ENCODE measurements at regions of chr7 and their contacts with region 1.

Region 1: DNA sequence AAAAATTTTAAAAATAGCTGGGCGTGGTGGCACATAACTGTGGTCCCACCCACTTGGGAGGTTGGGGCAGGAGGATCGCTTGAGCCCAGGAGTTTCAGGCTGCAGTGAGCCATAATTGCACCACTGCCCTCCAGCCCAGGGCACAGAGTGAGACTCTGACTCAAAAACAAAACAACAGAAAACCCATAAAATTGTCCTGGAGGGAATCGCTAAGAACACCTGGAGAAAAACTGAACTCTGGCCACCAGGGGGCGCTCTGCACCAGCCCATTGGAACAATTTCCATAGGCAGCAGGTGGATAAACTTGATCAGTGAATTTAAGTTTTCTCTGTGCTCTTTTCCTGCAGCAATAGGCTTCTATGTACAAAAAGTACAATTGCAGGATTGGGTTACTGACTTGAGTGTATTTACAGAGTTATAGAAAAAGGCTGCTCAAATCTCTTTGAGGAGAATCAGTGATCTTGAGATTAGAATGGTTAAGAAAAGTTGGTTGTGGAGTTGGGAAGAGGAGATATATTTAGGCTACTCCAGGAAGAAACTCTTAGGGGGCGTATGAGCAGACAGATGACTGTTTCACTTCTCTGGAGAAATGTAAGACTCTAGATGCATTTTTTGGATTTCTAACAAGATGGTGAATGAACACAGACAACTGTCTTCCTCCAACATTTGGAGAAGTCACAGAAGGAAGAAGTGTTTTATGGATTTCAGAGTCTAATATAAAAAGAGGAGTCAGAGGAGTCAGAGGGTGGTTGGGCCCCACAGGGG is 274.9 kb upstream of the GALNT17 start:
- DNase-seq: peak; percentile 58
- H3K4me3 Mint-ChIP-seq: no peak overlapping the region
- H3K27ac Mint-ChIP-seq: no peak overlapping the region
- H3K4me1 Mint-ChIP-seq: no peaks in the 10 kb centered on the region
- H3K27me3 Mint-ChIP-seq: no peaks in the 10 kb centered on the region

Region 2: GRCh38 chr7:71733107-71733870 is 876.2 kb after region 1 on chr7:
- CTCF ChIA-PET with region 1: interaction called, 14 read pairs
- POLR2A ChIA-PET with region 1: no interaction called
- DNase-seq: peak; percentile 59
- H3K4me3 Mint-ChIP-seq: no peak overlapping the region
- H3K27ac Mint-ChIP-seq: no peak overlapping the region
- H3K4me1 Mint-ChIP-seq: no peaks in the 10 kb centered on the region
- H3K27me3 Mint-ChIP-seq: no peaks in the 10 kb centered on the region

Measured in activated CD4-positive, alpha-beta memory T cell treated with anti-CD3 and anti-CD28 coated beads, Interleukin-2, amount 10 ng/mL, durations not matched to agents 7 days and 5 days (primary cell).